Vagina (tissue), 2 donors: ENCODE measurements at regions of chr20 and their contacts with region 1.

Region 1: DNA sequence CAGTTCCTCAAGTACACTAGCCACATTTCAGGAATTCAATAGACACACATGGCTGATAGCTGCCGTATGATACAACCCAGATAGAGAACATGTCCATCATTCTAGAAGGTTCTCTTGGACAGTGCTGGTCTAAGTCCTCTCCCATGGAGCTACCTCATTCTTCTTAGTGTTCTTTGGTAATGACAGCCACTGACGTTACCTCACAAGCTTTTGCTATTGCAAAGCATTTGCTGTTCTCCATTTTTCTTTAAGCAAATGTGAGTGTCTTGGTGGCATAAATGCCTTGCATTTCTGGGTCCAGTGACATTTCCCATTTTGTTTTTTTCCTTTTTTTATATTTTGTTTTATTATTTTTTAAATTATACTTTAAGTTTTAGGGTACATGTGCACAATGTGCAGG is 8.3 kb upstream of the CEBPB start:
- DNase-seq: no peak
- H3K4me3 ChIP-seq: no peak overlapping the region
- H3K27ac ChIP-seq: no peak overlapping the region
- H3K4me1 ChIP-seq: peaks cover 11% of the 10 kb centered on the region
- H3K27me3 ChIP-seq: no peaks in the 10 kb centered on the region
- CTCF ChIP-seq: no peak
- POLR2A ChIP-seq: no peak

Region 2: GRCh38 chr20:50425085-50425484 is 242.7 kb after region 1 on chr20:
- intact Hi-C with region 1: no loop called
- DNase-seq: no peak
- H3K4me3 ChIP-seq: no peak overlapping the region
- H3K27ac ChIP-seq: no peak overlapping the region
- H3K4me1 ChIP-seq: peaks cover 47% of the 10 kb centered on the region
- H3K27me3 ChIP-seq: no peaks in the 10 kb centered on the region
- CTCF ChIP-seq: no peak
- POLR2A ChIP-seq: no peak

Region 3: DNA sequence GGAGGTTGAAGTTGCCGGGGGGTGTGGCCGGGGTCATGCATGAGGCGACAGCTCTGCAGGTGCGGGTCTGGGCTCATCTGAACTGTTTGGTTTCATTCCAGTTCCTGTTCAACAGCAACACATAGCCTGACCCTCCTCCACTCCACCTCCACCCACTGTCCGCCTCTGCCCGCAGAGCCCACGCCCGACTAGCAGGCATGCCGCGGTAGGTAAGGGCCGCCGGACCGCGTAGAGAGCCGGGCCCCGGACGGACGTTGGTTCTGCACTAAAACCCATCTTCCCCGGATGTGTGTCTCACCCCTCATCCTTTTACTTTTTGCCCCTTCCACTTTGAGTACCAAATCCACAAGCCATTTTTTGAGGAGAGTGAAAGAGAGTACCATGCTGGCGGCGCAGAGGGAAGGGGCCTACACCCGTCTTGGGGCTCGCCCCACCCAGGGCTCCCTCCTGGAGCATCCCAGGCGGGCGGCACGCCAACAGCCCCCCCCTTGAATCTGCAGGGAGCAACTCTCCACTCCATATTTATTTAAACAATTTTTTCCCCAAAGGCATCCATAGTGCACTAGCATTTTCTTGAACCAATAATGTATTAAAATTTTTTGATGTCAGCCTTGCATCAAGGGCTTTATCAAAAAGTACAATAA is 400.4 kb after region 1 on chr20:
- intact Hi-C with region 1: loop called (anchors 2 kb)
- DNase-seq: no peak
- H3K4me3 ChIP-seq: no peak overlapping the region
- H3K27ac ChIP-seq: peak overlapping the region; percentile 36
- H3K4me1 ChIP-seq: peaks cover 15% of the 10 kb centered on the region
- H3K27me3 ChIP-seq: no peaks in the 10 kb centered on the region
- CTCF ChIP-seq: no peak
- POLR2A ChIP-seq: no peak